ENCODE measurements at regions of chr17 and their contacts with region 1.

Region 1: DNA sequence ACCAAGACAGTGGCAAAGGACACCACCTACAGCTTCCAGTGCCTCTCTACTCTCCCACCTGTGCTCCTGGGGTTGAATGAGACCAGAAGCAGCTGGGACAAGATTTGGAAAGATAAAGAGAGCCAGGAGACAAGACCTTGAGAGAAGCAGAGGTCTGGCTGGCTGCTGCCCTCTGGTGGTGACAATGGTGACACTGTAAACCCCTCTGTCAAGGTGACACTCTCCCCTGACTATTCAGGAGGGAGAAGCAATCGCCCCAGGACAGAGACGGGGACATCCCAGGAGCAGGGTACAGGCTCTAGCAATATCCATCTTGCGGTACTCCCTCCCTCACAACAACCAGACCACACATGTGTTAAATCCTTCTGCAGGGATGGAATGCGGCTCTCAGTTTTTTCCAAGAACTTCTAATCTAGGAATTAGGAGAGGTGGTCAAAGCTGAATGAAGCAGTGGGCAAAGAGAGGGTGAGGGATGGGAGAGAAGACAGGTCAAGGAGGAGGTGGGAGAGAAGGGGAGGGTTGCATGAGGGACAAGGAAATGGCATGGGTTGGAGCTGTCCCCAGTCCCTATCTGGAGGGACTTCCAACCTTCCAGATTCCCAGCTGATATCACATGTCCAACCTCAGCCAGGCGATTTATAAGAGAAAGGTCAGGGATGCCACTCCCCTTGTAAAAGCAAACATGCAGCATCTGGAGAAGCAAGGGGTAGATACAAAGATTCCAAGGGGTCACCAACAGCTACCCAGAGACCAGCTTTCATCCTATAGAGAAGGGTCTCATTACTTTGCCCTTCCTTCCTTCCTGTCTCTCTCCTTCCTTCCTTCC is 2.9 kb downstream of the PHOSPHO1 start:
- DNase-seq: peak; percentile 67 to 86 (median 76)
- ATAC-seq: peak in 3 of 4 donors; percentile 46 to 53 (median 52)
- H3K4me3 ChIP-seq: no peak overlapping the region
- H3K27ac ChIP-seq: no peak overlapping the region
- H3K4me1 ChIP-seq: peaks cover 0 to 53% (median 30%) of the 10 kb centered on the region in 12 donors
- H3K27me3 ChIP-seq: peaks cover 11 to 36% (median 26%) of the 10 kb centered on the region in 9 donors
- CTCF ChIP-seq: peak; percentile 71 to 88 (median 82)
- POLR2A ChIP-seq: no peak

Region 2: DNA sequence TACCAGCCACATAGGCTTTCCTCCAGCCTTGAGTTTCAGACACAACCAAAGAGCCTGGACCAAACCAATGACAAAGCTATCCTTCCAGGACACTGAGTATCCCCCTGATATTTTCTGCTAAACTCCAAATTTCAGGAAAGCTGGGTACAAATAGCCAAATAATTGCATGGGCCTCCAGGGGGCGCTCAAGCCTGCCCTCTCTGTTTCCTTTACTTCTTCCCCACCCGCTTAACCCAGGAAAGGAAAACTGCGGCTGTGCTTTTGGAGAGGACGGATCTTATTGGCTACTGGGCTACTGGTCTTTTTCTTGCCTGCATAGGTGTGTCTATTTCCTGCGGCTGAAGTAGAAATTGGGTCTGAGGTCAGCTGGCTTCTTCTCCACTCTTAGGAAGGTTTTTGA is 47.3 kb before region 1 on chr17:
- intact Hi-C with region 1: loop called in 9 of 10 experiments (anchors 1 to 10 kb)
- DNase-seq: peak; percentile 55 to 74 (median 66)
- ATAC-seq: peak in 3 of 4 donors; percentile 34 to 75 (median 59)
- H3K4me3 ChIP-seq: no peak overlapping the region
- H3K27ac ChIP-seq: no peak overlapping the region
- H3K4me1 ChIP-seq: no peaks in the 10 kb centered on the region
- H3K27me3 ChIP-seq: no peaks in the 10 kb centered on the region
- CTCF ChIP-seq: peak; percentile 60 to 83 (median 76)
- POLR2A ChIP-seq: no peak

Region 3: DNA sequence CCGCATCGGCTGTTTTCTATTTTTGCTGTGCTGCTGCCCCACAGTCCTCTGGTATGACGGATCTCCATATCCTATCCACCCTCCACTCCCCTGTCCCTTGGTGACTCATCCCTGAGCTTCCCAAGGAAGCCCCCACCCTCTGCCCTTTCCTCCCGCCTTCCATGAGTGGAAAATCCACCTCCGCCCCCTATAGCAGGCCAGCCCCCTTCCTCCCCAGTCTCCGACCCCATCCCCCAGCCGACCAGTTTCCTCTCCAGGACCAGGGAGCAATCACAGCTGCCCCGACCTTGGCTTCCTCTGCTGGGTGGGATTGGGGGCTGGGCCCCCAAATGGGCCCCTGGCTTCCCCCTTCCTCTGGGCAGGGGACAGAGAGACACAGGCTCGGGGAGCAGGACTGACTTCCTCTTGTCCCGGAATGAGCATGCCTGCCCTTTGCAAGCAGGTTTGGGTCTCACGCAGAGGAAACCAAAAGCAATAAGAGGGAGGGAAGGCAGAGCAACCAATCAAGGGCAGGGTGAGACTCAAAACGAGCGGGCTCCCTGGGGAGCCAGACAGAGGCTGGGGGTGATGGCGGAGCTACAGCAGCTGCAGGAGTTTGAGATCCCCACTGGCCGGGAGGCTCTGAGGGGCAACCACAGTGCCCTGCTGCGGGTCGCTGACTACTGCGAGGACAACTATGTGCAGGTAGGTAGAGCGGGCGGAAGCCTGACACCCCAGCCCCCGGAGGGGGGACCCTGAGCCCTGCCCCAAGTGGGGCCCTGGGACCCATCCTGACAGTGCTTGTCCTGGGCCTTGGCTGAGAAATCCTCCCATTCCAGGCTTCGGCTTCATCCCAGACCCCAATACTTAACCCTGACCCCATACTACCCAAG is 17.3 kb before region 1 on chr17 and contains the starts of genes ABI3 and GNGT2:
- intact Hi-C with region 1: loop called in 1 of 10 experiments (anchors 2 kb)
- DNase-seq: peak; percentile 46 to 75 (median 64)
- ATAC-seq: peak; percentile 83 to 93 (median 88)
- H3K4me3 ChIP-seq: peak within 1 kb of the TSS; percentile 32 to 70 (median 60)
- H3K27ac ChIP-seq: peak within 1 kb of the TSS; percentile 65 to 91 (median 84)
- H3K4me1 ChIP-seq: peaks cover 0 to 69% (median 24%) of the 10 kb centered on the region in 12 donors
- H3K27me3 ChIP-seq: peaks cover 0 to 7% (median 0%) of the 10 kb centered on the region in 9 donors
- CTCF ChIP-seq: no peak
- POLR2A ChIP-seq: peak in 1 of 2 donors; percentile 41
- total RNA-seq, gene ABI3: 3.3 to 16.1 (median 6.4) TPM
- total RNA-seq, gene GNGT2: 0.76 to 4.9 (median 1.2) TPM

Region 4: DNA sequence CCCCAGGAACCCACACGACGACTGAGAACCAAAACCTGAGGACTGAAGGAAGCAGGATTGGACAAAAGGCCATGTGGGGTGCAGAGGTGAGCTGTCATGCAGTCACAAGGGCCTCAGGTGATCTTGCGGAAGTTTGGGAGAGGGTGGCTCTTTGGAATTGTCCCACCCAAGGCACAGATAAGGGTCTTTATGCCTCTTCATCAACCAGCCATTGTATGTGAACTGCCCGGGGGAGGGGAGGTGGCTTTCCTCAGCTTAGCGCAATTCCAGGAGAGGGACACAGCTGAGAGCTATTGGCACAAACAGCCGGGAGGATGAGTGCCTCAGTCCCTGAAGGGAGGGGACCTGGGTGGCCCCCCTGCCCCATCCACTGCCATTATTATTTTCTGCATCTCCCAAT is 58.1 kb after region 1 on chr17:
- intact Hi-C with region 1: loop called (anchors 2 to 10 kb)
- DNase-seq: no peak
- ATAC-seq: no peak
- H3K4me3 ChIP-seq: no peak overlapping the region
- H3K27ac ChIP-seq: no peak overlapping the region
- H3K4me1 ChIP-seq: no peaks in the 10 kb centered on the region
- H3K27me3 ChIP-seq: no peaks in the 10 kb centered on the region
- CTCF ChIP-seq: no peak
- POLR2A ChIP-seq: no peak

Region 5: GRCh38 chr17:49390548-49391324 is 163.1 kb after region 1 on chr17:
- intact Hi-C with region 1: loop called in 1 of 10 experiments (anchors 10 kb)
- DNase-seq: peak in 4 of 5 donors; percentile 10 to 68 (median 28)
- ATAC-seq: peak in 3 of 4 donors; percentile 47 to 72 (median 70)
- H3K4me3 ChIP-seq: peak overlapping the region in 2 of 12 donors; percentile 26 to 48
- H3K27ac ChIP-seq: peak overlapping the region in 5 of 12 donors; percentile 27 to 92 (median 39)
- H3K4me1 ChIP-seq: peaks cover 0 to 69% (median 4%) of the 10 kb centered on the region in 12 donors
- H3K27me3 ChIP-seq: no peaks in the 10 kb centered on the region
- CTCF ChIP-seq: no peak
- POLR2A ChIP-seq: no peak